ENCODE measurements at regions of chr17 and their contacts with region 1.

Region 1: GRCh38 chr17:75845049-75845860 is 1.1 kb upstream of the UNC13D start:
- DNase-seq: no peak
- H3K4me3 Mint-ChIP-seq: peak overlapping the region; percentile 66
- H3K27ac Mint-ChIP-seq: peak overlapping the region; percentile 48
- H3K4me1 Mint-ChIP-seq: peaks cover 16% of the 10 kb centered on the region
- H3K27me3 Mint-ChIP-seq: no peaks in the 10 kb centered on the region

Region 2: GRCh38 chr17:75764711-75765421 is 80.4 kb before region 1 on chr17 and contains the start of gene GALK1:
- intact Hi-C with region 1: loop called (anchors 2 kb)
- DNase-seq: peak; percentile 73
- H3K4me3 Mint-ChIP-seq: peak within 1 kb of the TSS; percentile 84
- H3K27ac Mint-ChIP-seq: peak within 1 kb of the TSS; percentile 72
- H3K4me1 Mint-ChIP-seq: peaks cover 6% of the 10 kb centered on the region
- H3K27me3 Mint-ChIP-seq: no peaks in the 10 kb centered on the region
- total RNA-seq, gene GALK1: 48.0 and 49.3 TPM in 2 replicates

Region 3: GRCh38 chr17:75799398-75799797 is 45.9 kb before region 1 on chr17:
- intact Hi-C with region 1: no loop called
- DNase-seq: no peak
- H3K4me3 Mint-ChIP-seq: no peak overlapping the region
- H3K27ac Mint-ChIP-seq: no peak overlapping the region
- H3K4me1 Mint-ChIP-seq: peaks cover 17% of the 10 kb centered on the region
- H3K27me3 Mint-ChIP-seq: no peaks in the 10 kb centered on the region

Region 4: GRCh38 chr17:75832652-75833400 is 12.4 kb before region 1 on chr17:
- intact Hi-C with region 1: loop called (anchors 1 kb)
- DNase-seq: no peak
- H3K4me3 Mint-ChIP-seq: peak overlapping the region; percentile 67
- H3K27ac Mint-ChIP-seq: peak overlapping the region; percentile 73
- H3K4me1 Mint-ChIP-seq: peaks cover 27% of the 10 kb centered on the region
- H3K27me3 Mint-ChIP-seq: no peaks in the 10 kb centered on the region

Measured in activated T-helper 1 cell treated with anti-CD3 and anti-CD28 coated beads, Interleukin-12 subunit alpha, Interleukin-12 subunit beta, Interleukin-2, Interleukin-4 antibody, amounts not matched to agents 30 ng/mL and 10 ng/mL and 1 ng/mL, durations not matched to agents 14 hours and 24 hours and 36 hours (primary cell).